Activated CD4-positive, alpha-beta memory T cell treated with anti-CD3 and anti-CD28 coated beads for 36 hours (primary cell): ENCODE measurements at regions of chr10 and their contacts with region 1.

Region 1: GRCh38 chr10:11713186-11713743 is 28.9 kb upstream of the ECHDC3 start:
- DNase-seq: no peak
- H3K4me3 Mint-ChIP-seq: no peak overlapping the region
- H3K27ac Mint-ChIP-seq: no peak overlapping the region
- H3K4me1 Mint-ChIP-seq: peaks cover 15% of the 10 kb centered on the region
- H3K27me3 Mint-ChIP-seq: peaks cover 46% of the 10 kb centered on the region

Region 2: GRCh38 chr10:11611248-11612020 is 101.8 kb before region 1 on chr10 and contains the start of gene USP6NL:
- CTCF ChIA-PET with region 1: interaction called, 4 read pairs
- POLR2A ChIA-PET with region 1: no interaction called
- intact Hi-C with region 1: loop called (anchors 10 kb)
- DNase-seq: peak; percentile 72
- H3K4me3 Mint-ChIP-seq: peak within 1 kb of the TSS; percentile 83
- H3K27ac Mint-ChIP-seq: peak within 1 kb of the TSS; percentile 70
- H3K4me1 Mint-ChIP-seq: peaks cover 38% of the 10 kb centered on the region
- H3K27me3 Mint-ChIP-seq: peaks cover 2% of the 10 kb centered on the region
- total RNA-seq, gene USP6NL: 3.2 to 3.4 TPM

Region 3: DNA sequence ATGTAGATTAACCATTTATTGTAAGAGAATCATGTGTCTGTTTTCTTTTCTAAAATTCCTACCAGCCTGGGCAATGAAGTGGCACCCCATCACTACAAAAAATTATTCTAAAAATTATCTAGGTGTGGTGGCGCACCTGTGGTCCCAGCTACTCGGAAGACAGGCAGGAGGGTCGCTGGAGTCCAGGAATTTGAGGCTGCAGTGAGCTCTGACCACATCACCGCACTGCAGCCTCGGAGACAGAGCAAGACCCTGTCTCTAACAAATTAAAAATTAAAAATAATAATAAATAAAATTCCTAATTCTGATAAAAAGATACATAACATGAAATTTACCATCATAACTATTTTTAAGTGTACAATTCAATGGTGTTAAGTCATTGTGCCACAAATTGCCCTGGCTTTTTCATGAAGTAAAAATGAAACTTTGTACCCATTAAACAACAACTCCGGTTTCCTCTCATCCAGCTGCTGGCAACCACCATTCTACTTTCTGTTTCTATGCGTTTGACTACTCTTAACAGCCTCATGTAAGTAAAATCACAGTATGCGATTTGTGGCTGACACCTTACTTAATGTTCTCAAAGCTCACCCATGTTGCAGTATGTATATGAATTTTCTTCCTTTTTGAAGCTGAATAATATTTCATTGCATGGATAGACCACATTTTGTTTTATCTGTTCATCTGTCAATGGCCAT is 81.2 kb before region 1 on chr10:
- CTCF ChIA-PET with region 1: no interaction called
- POLR2A ChIA-PET with region 1: no interaction called
- intact Hi-C with region 1: loop called (anchors 1 kb)
- DNase-seq: peak; percentile 58
- H3K4me3 Mint-ChIP-seq: no peak overlapping the region
- H3K27ac Mint-ChIP-seq: no peak overlapping the region
- H3K4me1 Mint-ChIP-seq: peaks cover 12% of the 10 kb centered on the region
- H3K27me3 Mint-ChIP-seq: peaks cover 12% of the 10 kb centered on the region

Region 4: GRCh38 chr10:11684717-11685645 is 28.3 kb before region 1 on chr10:
- CTCF ChIA-PET with region 1: no interaction called
- POLR2A ChIA-PET with region 1: no interaction called
- intact Hi-C with region 1: loop called (anchors 1 kb)
- DNase-seq: peak; percentile 80
- H3K4me3 Mint-ChIP-seq: peak overlapping the region; percentile 67
- H3K27ac Mint-ChIP-seq: peak overlapping the region; percentile 82
- H3K4me1 Mint-ChIP-seq: peaks cover 27% of the 10 kb centered on the region
- H3K27me3 Mint-ChIP-seq: no peaks in the 10 kb centered on the region